ENCODE measurements at regions of chr2 and their contacts with region 1.

Region 1: DNA sequence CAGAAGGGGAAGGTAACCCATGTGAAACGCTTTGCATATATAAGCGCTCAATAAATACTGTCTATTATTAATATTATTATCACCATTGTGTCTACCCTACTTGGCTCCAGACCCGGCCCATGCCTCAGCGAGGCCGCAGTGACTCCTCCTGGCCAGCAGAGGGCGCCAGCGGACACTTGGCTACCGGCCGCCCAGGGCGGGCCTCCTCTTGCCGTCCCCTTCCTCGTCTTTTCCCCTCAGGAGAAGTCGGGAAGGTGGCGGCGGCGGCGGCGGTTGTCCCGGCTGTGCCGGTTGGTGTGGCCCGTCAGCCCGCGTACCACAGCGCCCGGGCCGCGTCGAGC is at the start of gene AGFG1:
- DNase-seq: peak; percentile 84 to 95 (median 85)
- ATAC-seq: peak; percentile 85 to 94 (median 93)
- H3K4me3 ChIP-seq: peak within 1 kb of the TSS; percentile 69 to 99 (median 90)
- H3K27ac ChIP-seq: peak within 1 kb of the TSS in 11 of 12 donors; percentile 61 to 91 (median 88)
- H3K4me1 ChIP-seq: peaks cover 0 to 48% (median 26%) of the 10 kb centered on the region in 12 donors
- H3K27me3 ChIP-seq: no peaks in the 10 kb centered on the region
- CTCF ChIP-seq: peak; percentile 96 to 100 (median 99)
- POLR2A ChIP-seq: peak in 1 of 2 donors; percentile 65
- total RNA-seq, gene AGFG1: 48.4 to 92.1 (median 60.0) TPM

Region 2: GRCh38 chr2:227214622-227215041 is 257.3 kb before region 1 on chr2:
- intact Hi-C with region 1: no loop called
- DNase-seq: no peak
- ATAC-seq: no peak
- H3K4me3 ChIP-seq: no peak overlapping the region
- H3K27ac ChIP-seq: no peak overlapping the region
- H3K4me1 ChIP-seq: peaks cover 0 to 12% (median 0%) of the 10 kb centered on the region in 12 donors
- H3K27me3 ChIP-seq: no peaks in the 10 kb centered on the region
- CTCF ChIP-seq: no peak
- POLR2A ChIP-seq: no peak

Region 3: DNA sequence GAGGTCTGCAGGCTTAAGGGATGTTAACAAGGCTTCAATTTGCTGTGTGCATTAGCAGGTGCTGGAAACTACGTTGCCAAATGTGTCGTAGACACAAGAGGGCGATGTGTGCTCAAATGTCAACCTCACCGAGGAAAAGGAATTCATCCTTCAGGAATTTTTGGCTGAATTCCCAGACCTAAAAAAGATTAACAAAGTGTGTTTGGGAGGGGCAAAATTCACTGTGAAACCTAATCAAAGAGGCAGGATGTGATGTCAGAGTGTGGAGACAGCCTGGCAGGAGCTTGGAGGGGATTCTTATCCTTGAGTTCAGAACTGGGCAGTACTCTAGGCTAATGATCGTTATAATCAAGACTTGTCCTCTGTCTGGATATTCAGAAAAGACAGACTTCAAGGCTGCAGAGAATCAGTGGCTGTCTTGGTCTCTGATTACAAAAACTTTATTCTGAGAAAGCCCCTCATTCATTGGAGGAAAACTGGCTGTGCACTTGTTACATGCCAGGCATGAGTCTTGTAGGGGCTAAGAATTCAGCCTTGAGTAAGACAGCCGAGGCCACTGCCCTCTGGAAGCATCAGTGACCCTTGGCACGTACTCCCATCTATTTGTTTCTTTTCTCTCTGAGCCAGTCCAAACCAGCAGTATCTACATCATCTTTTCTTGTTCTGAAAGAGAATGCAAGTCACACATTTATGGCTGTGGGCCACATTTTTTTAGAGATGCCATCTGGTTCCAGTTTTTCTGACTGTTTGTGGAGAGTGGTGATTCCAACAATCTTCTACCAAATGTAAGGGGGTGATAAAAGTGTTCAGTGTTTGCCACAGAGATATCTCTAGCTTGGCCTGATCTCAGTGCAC is 65.5 kb before region 1 on chr2:
- intact Hi-C with region 1: loop called in 8 of 10 experiments (anchors 2 to 5 kb)
- DNase-seq: peak in 4 of 5 donors; percentile 66 to 72 (median 68)
- ATAC-seq: peak; percentile 79 to 91 (median 88)
- H3K4me3 ChIP-seq: no peak overlapping the region
- H3K27ac ChIP-seq: peak overlapping the region; percentile 9 to 87 (median 64)
- H3K4me1 ChIP-seq: peaks cover 0 to 39% (median 12%) of the 10 kb centered on the region in 12 donors
- H3K27me3 ChIP-seq: no peaks in the 10 kb centered on the region
- CTCF ChIP-seq: peak; percentile 48 to 84 (median 73)
- POLR2A ChIP-seq: no peak

Region 4: GRCh38 chr2:227509824-227510619 is 38.1 kb after region 1 on chr2:
- intact Hi-C with region 1: loop called in 1 of 10 experiments (anchors 5 kb)
- DNase-seq: no peak
- ATAC-seq: no peak
- H3K4me3 ChIP-seq: no peak overlapping the region
- H3K27ac ChIP-seq: no peak overlapping the region
- H3K4me1 ChIP-seq: peaks cover 0 to 98% (median 79%) of the 10 kb centered on the region in 12 donors
- H3K27me3 ChIP-seq: no peaks in the 10 kb centered on the region
- CTCF ChIP-seq: no peak
- POLR2A ChIP-seq: no peak

Region 5: GRCh38 chr2:227566012-227566411 is 94.1 kb after region 1 on chr2:
- intact Hi-C with region 1: loop called in 2 of 10 experiments (anchors 10 kb)
- DNase-seq: no peak
- ATAC-seq: peak in 1 of 4 donors; percentile 22
- H3K4me3 ChIP-seq: no peak overlapping the region
- H3K27ac ChIP-seq: no peak overlapping the region
- H3K4me1 ChIP-seq: peaks cover 0 to 4% (median 0%) of the 10 kb centered on the region in 12 donors
- H3K27me3 ChIP-seq: no peaks in the 10 kb centered on the region
- CTCF ChIP-seq: no peak
- POLR2A ChIP-seq: no peak

Region 6: DNA sequence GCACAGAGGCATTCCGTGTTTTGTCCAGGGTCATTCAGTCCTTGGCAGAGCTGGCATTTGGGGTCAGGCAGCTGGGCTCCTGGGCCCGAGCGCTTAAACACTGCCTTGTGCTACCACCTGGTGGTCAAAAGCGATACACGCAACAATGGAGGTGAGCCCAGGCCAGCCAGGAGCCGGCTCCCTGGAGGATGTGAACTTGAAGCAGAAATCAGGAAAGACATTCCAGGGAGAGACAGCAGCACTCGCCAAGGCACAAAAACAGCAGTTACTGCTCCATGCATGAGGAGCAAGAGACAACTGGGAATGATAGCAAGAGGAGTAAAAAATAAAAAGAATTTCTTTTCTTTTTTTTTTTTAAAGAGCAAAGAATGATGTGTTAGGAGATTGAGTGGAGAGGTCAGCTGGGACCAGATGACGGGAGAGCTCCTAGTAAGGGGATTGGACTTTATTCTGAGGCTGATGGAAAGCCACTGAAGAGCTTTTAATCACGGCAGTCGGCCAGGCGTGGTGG is 294.5 kb after region 1 on chr2:
- intact Hi-C with region 1: loop called in 9 of 10 experiments (anchors 2 to 10 kb)
- DNase-seq: peak; percentile 66 to 84 (median 81)
- ATAC-seq: peak; percentile 85 to 99 (median 97)
- H3K4me3 ChIP-seq: no peak overlapping the region
- H3K27ac ChIP-seq: peak overlapping the region in 2 of 12 donors; percentile 4 to 42
- H3K4me1 ChIP-seq: peaks cover 0 to 10% (median 5%) of the 10 kb centered on the region in 12 donors
- H3K27me3 ChIP-seq: no peaks in the 10 kb centered on the region
- CTCF ChIP-seq: peak; percentile 71 to 91 (median 87)
- POLR2A ChIP-seq: no peak